ENCODE measurements at regions of chr15 and their contacts with region 1.

Region 1: GRCh38 chr15:38683382-38684242 is 119.0 kb upstream of the RASGRP1 start:
- DNase-seq: no peak
- H3K4me3 ChIP-seq: no peak overlapping the region
- H3K27ac ChIP-seq: no peak overlapping the region
- H3K27me3 ChIP-seq: peaks cover 4% of the 10 kb centered on the region
- CTCF ChIP-seq: peak; percentile 82

Region 2: GRCh38 chr15:38453971-38454695 is 229.5 kb before region 1 on chr15 and contains the start of gene FAM98B:
- CTCF ChIA-PET with region 1: interaction called, 20 read pairs
- POLR2A ChIA-PET with region 1: no interaction called
- DNase-seq: peak; percentile 69
- H3K4me3 ChIP-seq: peak within 1 kb of the TSS; percentile 92
- H3K27ac ChIP-seq: peak within 1 kb of the TSS; percentile 85
- H3K27me3 ChIP-seq: no peaks in the 10 kb centered on the region
- CTCF ChIP-seq: no peak; the same call in none of the 2 replicates
- polyA plus RNA-seq, gene FAM98B: 11.4 and 19.6 TPM in 2 replicates

Region 3: GRCh38 chr15:38474155-38474757 is 209.4 kb before region 1 on chr15:
- CTCF ChIA-PET with region 1: interaction called, 45 read pairs
- POLR2A ChIA-PET with region 1: no interaction called
- DNase-seq: no peak
- H3K4me3 ChIP-seq: no peak overlapping the region
- H3K27ac ChIP-seq: no peak overlapping the region
- H3K27me3 ChIP-seq: no peaks in the 10 kb centered on the region
- CTCF ChIP-seq: peak; percentile 84

Measured in AG04450 (cell line).